Left cardiac atrium (tissue), 4 donors: ENCODE measurements at regions of chr19 and their contacts with region 1.

Region 1: DNA sequence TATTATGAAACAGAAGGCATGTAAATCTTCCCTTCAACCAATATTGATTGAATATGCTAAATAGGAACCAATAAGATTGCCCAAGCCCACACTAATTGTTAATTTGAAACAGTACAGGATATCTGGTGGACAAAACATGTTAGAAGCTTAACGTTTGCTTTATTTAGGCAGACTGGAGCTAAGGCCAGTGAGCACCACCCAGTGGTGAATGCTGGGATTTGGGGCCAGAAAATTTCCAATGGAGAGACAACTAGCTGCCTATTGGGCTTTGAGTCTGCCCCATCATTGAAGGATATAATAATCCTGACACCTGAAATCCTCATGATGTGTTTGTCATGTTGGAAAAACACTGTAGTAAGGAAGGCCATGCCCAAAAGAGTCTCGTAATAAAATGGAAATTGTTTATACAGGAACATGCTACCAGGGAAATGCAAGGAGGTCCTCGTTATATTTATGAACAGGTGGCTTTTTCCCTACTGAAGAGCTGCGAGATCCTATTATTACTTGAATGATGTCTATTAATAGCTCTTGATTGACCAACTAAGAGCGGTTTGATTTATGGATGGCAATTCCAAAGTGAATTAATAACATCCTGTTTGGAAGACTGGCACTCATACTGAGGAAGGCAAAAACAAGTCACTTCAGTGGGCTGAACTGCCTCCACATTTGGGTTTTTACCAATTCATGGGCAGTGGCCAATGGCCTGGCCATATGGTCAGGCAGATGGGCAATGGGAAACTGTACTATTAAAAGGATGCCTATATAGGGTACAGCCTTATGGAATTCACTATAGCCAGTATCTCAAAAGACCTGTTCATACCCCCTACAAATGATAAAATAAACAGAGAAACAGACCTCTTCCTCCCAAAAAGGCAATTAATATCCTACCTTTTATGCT is 8.7 kb downstream of the SIGLECL1 start:
- DNase-seq: no peak
- ATAC-seq: peak in 1 of 2 donors; percentile 47

Region 2: GRCh38 chr19:51289635-51290034 is 30.0 kb after region 1 on chr19:
- intact Hi-C with region 1: loop called in 1 of 2 experiments (anchors 2 kb)
- DNase-seq: no peak
- ATAC-seq: no peak